ENCODE measurements at regions of chr3 and their contacts with region 1.

Region 1: DNA sequence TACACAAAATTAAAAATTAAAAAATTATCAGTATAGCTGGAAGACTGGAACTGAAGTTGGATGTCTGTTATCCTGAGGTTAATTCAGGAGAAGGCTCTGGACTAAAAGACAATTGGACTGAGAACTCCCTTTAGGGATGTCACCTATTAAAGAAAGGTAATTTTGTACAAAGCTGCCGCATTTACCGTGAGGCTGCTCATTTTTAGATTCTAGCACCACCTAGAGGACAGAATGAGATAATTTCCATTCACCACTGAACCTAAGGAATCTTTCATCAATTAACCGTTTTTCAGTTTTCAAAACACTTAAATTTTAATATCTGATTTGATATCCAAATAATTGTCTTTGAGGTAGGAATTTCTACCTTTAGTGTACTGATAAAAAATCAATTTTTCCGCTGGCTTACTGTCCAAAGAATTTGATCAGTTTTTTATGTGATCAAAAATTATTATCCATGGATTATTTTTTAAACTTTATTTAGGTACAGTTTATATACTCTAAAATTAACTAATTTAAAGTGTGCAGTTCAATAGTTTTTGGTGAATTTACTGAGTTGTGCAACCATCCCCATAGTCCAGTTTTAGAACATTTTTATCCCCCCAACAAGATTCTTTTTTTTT is 106.7 kb upstream of the TNIK start:
- DNase-seq: no peak
- H3K4me3 ChIP-seq: no peak overlapping the region
- H3K27ac ChIP-seq: no peak overlapping the region
- H3K4me1 ChIP-seq: peaks cover 0 to 13% (median under 1%) of the 10 kb centered on the region in 4 donors
- H3K27me3 ChIP-seq: no peaks in the 10 kb centered on the region
- CTCF ChIP-seq: peak; percentile 71 to 81 (median 77)
- EP300 ChIP-seq: no peak
- POLR2A ChIP-seq: no peak

Region 2: DNA sequence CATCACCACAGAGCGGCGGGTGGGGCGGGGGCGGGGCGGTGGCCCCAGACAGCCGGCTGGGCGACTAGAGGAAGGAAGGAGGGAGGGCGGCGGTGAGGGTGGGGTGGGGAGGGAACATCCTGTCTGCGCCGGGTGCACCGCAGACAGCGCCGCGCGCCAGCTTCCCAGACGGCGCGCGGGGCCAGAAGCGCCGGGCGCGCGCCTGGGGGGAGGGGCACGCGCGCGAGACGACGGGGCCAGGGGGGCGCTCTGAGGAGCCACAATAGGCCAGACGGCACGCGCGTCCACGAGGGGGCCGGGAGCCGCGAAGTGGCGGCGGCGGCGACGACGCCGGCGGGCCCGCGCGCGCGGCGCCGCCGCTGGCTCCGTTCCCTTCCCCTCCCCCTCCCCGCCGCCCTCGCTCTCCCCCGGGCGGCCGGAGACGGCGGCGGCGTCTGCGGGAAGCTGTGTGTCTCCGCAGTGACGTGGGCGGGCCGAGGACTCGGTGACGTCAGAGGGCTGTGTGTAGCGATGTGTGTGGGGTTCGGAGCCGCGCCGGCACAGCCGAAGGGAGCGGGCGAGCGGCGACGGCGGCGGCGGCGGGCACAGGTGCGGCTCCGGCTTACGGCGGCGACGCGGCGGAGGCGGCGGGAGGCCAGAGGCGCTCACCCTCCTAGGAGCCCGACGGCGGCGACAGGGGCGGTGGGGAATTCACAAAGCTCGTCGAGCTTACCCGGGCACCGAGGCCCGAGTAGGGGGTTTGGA is 1209.6 kb before region 1 on chr3 and contains the start of gene SKIL:
- intact Hi-C with region 1: no loop called
- DNase-seq: peak; percentile 99
- H3K4me3 ChIP-seq: peak within 1 kb of the TSS; percentile 77 to 96 (median 96)
- H3K27ac ChIP-seq: peak within 1 kb of the TSS; percentile 97 to 100 (median 98)
- H3K4me1 ChIP-seq: peaks cover 22 to 55% (median 51%) of the 10 kb centered on the region in 4 donors
- H3K27me3 ChIP-seq: no peaks in the 10 kb centered on the region
- CTCF ChIP-seq: peak in 1 of 3 experiments; percentile 8
- EP300 ChIP-seq: peak; percentile 14
- POLR2A ChIP-seq: no peak
- total RNA-seq, gene SKIL: 34.7 to 54.4 (median 39.5) TPM

Region 3: GRCh38 chr3:170961616-170962400 is 605.1 kb before region 1 on chr3:
- intact Hi-C with region 1: loop called (anchors 2 kb)
- DNase-seq: no peak
- H3K4me3 ChIP-seq: no peak overlapping the region
- H3K27ac ChIP-seq: no peak overlapping the region
- H3K4me1 ChIP-seq: no peaks in the 10 kb centered on the region
- H3K27me3 ChIP-seq: no peaks in the 10 kb centered on the region
- CTCF ChIP-seq: peak; percentile 63 to 65 (median 63)
- EP300 ChIP-seq: no peak
- POLR2A ChIP-seq: no peak

Region 4: GRCh38 chr3:171049861-171050444 is 517.0 kb before region 1 on chr3:
- intact Hi-C with region 1: loop called (anchors 5 kb)
- DNase-seq: no peak
- H3K4me3 ChIP-seq: no peak overlapping the region
- H3K27ac ChIP-seq: no peak overlapping the region
- H3K4me1 ChIP-seq: no peaks in the 10 kb centered on the region
- H3K27me3 ChIP-seq: no peaks in the 10 kb centered on the region
- CTCF ChIP-seq: peak; percentile 49 to 61 (median 51)
- EP300 ChIP-seq: no peak
- POLR2A ChIP-seq: no peak

Region 5: DNA sequence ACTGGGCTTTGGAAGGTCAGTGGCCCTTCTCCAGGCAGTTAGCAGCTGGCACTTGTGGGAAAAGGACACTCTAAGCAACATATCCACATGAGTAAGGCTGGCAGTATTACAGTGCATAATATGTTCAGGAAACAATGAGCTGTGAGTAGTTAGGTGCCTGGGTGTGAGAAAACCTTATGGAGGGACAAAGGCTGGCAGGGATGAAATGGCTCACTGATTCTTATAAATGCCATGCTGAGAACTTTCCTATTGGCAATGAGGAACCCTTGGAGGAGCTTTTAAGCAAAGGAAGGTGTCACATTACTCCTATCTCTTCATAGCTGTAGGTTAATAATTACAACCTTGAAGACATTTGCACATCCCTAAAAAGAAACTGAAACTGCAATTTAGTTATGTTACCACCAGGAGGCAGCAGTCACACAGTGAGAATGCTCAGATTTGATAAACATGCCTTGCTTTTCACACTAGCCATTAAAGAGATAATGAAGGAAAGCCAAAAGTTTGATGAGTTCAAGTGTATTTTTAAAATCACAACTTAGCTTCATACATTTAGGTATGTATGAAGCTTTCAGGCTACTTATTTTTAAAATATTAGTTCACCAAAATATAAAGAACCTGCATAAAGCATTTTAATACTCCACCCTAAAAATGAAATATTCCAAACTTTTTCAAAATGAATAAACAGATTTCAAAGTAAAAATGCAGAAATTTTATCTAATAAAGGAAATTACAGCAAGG is 403.8 kb before region 1 on chr3:
- intact Hi-C with region 1: loop called (anchors 5 kb)
- DNase-seq: no peak
- H3K4me3 ChIP-seq: no peak overlapping the region
- H3K27ac ChIP-seq: no peak overlapping the region
- H3K4me1 ChIP-seq: no peaks in the 10 kb centered on the region
- H3K27me3 ChIP-seq: no peaks in the 10 kb centered on the region
- CTCF ChIP-seq: peak; percentile 20 to 61 (median 38)
- EP300 ChIP-seq: no peak
- POLR2A ChIP-seq: no peak

Region 6: DNA sequence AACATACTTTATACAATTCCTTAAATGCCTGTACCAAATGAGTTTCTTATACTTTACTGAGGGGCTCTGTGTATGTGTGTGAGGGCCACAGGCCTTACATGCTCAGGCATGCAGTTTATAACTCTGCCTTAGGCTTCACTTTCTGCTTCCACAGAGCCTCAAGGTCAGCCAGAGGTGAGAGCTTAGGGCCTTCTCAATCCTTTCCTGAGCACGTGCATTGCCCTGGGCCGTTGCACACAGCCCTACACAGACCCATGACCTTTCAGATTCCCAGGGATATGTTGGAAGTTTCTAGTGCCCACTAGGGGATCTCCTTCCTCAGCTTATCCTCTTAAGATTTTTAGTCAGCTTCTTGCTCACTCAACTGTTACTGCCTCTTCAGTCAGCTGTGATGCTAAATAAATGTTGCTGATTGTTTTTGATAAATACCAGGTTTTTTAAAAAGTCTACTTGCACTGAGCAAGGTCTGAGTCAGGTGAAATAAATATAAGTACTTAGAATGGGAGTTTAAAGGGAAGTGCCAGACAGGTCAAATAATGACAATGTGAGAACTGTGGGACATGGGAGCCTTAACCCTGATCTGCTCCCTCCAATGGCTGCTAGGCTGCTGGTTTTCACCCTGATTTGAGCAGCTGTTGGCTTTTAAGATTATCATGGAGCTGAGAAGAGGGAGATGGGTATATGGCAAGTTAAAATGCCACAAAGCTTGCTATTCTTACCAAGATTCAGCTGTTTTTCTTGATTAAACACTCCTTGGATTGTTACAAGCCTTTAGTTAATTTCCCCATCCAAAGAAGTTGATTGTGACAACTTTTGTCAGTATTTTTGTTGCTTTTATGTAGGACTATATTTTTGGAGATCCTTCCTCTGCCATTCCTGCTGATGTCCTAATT is 73.9 kb after region 1 on chr3:
- intact Hi-C with region 1: no loop called
- DNase-seq: no peak
- H3K4me3 ChIP-seq: no peak overlapping the region
- H3K27ac ChIP-seq: no peak overlapping the region
- H3K4me1 ChIP-seq: peaks cover 8 to 12% (median 10%) of the 10 kb centered on the region in 4 donors
- H3K27me3 ChIP-seq: no peaks in the 10 kb centered on the region
- CTCF ChIP-seq: no peak
- EP300 ChIP-seq: no peak
- POLR2A ChIP-seq: no peak

Measured in esophagus muscularis mucosa (tissue), 4 donors.